WTC11 (cell line): ENCODE measurements at regions of chr20 and their contacts with region 1.

Region 1: DNA sequence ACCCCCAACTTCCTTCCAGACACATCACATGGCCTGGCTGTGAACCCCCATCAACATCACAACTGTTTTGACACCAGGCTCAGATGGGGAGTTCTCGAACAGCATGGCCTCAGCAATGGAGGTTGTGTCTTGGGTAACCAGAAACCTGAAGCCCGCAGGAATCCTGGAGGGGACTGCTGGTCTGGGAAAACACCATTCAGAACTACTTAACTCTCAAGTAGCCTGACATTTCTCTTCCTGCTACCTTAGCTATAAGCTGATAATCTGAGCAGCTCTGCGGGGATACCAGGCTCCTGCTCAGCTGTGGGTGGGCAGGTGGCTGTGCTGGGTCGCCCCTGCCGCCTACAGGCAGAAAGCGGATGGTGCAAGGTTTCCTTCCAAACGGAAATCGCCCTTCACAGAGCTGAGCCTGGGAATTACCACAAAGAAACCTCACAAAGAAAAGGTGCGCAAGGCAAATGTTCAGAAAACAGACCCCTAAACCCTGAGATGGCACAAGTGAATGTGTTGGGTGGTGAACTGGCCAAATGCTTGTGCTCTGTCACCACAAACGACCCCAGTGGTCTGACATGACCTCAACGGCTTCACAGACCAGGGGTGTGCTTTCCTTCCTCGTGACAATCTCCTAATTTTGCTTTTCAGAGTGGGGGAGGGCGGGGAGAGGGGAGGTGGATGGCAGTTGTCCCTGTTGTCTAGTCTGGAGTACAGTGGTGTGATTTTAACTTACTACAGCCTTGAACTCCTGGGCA is 29.5 kb downstream of the SNX5 start:
- DNase-seq: peak; percentile 82
- ATAC-seq: peak; percentile 71
- H3K4me3 Mint-ChIP-seq: no peak overlapping the region
- H3K27ac Mint-ChIP-seq: peak overlapping the region; percentile 98
- H3K4me1 Mint-ChIP-seq: peaks cover 70% of the 10 kb centered on the region
- H3K27me3 Mint-ChIP-seq: no peaks in the 10 kb centered on the region; the same call in 1 of the 2 replicates
- CTCF ChIP-seq: peak; percentile 88

Region 2: GRCh38 chr20:17601957-17602356 is 337.1 kb before region 1 on chr20:
- CTCF ChIA-PET with region 1: interaction called, 12 read pairs
- POLR2A ChIA-PET with region 1: no interaction called
- DNase-seq: no peak
- ATAC-seq: no peak; the same call in 1 of the 2 replicates
- H3K4me3 Mint-ChIP-seq: no peak overlapping the region
- H3K27ac Mint-ChIP-seq: peak overlapping the region; percentile 75
- H3K4me1 Mint-ChIP-seq: peaks cover 33% of the 10 kb centered on the region
- H3K27me3 Mint-ChIP-seq: no peaks in the 10 kb centered on the region
- CTCF ChIP-seq: no peak

Region 3: DNA sequence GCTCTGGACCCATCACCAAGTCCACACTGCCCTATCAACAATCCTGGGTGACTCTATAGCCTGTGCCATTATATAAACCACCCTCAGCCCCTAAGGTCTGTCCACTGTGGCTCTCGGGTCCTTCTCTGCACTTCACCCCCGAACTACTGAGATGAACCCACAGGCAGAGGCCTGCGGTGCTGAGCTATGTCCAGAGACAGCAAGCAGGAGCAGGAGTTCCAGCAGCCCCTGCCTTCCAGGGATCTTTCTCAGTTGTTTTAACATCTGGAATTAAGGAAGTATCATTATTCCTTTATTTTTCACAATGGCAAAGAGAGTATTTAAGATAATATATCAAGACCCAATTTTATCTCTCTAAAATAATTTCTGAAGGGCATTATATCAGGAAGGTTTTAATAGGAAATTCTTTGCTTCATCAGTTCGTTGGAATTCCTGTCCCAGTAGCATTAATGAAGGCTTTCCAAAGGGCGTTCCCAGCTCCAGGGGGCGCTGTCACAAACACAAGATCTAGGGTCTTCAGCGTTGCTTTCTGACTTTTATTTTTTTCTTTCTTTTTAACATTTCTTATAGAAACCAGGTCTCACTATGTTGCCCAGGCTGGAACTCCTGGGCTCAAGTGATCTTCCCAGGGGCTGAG is 284.3 kb before region 1 on chr20:
- CTCF ChIA-PET with region 1: interaction called, 24 read pairs
- POLR2A ChIA-PET with region 1: no interaction called
- DNase-seq: peak; percentile 80
- ATAC-seq: peak; percentile 47
- H3K4me3 Mint-ChIP-seq: no peak overlapping the region
- H3K27ac Mint-ChIP-seq: peak overlapping the region; percentile 82
- H3K4me1 Mint-ChIP-seq: peaks cover 61% of the 10 kb centered on the region
- H3K27me3 Mint-ChIP-seq: no peaks in the 10 kb centered on the region
- CTCF ChIP-seq: peak; percentile 77

Region 4: GRCh38 chr20:17786221-17786718 is 152.8 kb before region 1 on chr20:
- CTCF ChIA-PET with region 1: no interaction called
- POLR2A ChIA-PET with region 1: no interaction called
- DNase-seq: no peak
- ATAC-seq: no peak
- H3K4me3 Mint-ChIP-seq: no peak overlapping the region
- H3K27ac Mint-ChIP-seq: no peak overlapping the region
- H3K4me1 Mint-ChIP-seq: peaks cover 12% of the 10 kb centered on the region
- H3K27me3 Mint-ChIP-seq: no peaks in the 10 kb centered on the region; the same call in 1 of the 2 replicates
- CTCF ChIP-seq: no peak

Region 5: DNA sequence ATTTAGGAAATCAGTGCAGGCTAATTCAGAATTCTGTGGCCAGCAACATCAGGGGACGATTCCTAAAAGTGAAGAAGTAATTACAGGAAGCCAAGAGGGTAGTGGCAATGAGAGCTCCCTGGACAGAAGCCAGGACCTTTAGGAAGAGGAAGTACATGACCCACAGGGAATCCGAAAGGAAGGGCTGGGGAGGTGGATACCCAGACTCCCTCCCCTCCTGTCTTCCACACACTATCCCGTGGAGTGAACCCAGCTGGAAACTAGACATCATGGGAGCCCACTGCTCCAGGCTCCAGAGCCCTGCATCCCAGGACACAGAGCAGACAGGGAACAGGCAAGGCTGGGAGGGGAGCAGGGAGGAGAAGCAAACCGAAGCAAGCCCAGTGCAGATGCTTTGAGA is 53.5 kb before region 1 on chr20:
- CTCF ChIA-PET with region 1: interaction called, 18 read pairs
- POLR2A ChIA-PET with region 1: no interaction called
- DNase-seq: no peak
- ATAC-seq: no peak
- H3K4me3 Mint-ChIP-seq: no peak overlapping the region
- H3K27ac Mint-ChIP-seq: no peak overlapping the region
- H3K4me1 Mint-ChIP-seq: peaks cover 19% of the 10 kb centered on the region
- H3K27me3 Mint-ChIP-seq: no peaks in the 10 kb centered on the region; the same call in 1 of the 2 replicates
- CTCF ChIP-seq: no peak

Region 6: DNA sequence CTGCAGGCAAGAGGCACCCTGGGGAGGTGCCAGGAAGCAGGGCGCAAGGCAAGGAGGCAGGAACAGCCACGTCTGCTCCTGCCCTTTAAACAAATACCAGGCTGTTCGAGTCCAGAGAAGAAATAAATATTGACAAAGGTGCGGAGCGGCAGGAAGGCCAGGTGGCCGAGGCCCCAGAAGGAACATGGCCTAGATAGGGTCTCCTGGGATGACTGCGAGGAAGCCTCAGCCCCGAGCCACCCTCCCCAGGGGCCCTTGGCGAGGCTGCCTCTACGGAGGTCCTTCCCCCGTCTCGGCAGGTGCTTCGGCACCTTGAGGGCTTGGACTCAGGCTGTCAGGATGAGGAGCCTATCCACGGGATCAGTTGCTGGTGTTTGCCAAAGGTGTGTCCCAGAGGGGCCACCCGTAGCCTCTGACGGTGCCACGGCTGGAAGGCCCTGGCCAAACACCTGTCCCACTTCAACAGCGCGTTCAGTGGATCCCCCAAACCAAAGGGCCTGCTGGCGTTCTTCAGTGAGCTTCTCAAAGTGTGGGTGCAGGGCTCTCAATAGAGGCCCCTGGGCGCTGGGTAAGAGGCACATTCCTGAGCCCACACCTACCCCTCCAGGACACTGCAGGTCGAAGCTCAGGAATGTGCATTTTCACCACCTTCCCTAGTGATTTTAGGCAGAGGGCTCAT is 10.3 kb before region 1 on chr20:
- CTCF ChIA-PET with region 1: interaction called, 11 read pairs
- POLR2A ChIA-PET with region 1: no interaction called
- DNase-seq: no peak
- ATAC-seq: peak; percentile 70
- H3K4me3 Mint-ChIP-seq: no peak overlapping the region
- H3K27ac Mint-ChIP-seq: no peak overlapping the region
- H3K4me1 Mint-ChIP-seq: peaks cover 10% of the 10 kb centered on the region
- H3K27me3 Mint-ChIP-seq: peaks cover 7% of the 10 kb centered on the region
- CTCF ChIP-seq: no peak

Region 7: DNA sequence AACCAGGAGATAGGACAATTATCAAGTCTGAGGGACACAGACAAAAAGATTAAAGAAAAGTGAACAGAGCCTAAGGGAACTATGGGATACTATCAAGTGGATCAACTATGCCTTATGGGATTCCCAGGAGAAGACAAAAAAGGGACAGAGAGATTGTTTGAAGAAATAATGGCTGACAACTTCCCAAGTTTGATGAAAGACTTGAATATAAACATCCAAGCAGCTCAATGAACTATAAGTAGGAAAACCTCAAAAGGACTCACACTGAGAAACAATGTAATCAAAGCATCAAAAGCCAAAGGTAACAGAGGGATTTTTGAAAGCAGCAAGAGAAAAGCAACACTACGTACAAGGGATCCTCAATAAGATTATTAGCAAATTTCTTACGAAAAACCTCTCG is 360.3 kb after region 1 on chr20:
- CTCF ChIA-PET with region 1: no interaction called
- POLR2A ChIA-PET with region 1: no interaction called
- DNase-seq: no peak
- ATAC-seq: no peak
- H3K4me3 Mint-ChIP-seq: no peak overlapping the region
- H3K27ac Mint-ChIP-seq: no peak overlapping the region
- H3K4me1 Mint-ChIP-seq: peaks cover 8% of the 10 kb centered on the region; the same call in 1 of the 2 replicates
- H3K27me3 Mint-ChIP-seq: no peaks in the 10 kb centered on the region
- CTCF ChIP-seq: no peak